OCI-LY7 (cell line): ENCODE measurements at regions of chr14 and their contacts with region 1.

Region 1: DNA sequence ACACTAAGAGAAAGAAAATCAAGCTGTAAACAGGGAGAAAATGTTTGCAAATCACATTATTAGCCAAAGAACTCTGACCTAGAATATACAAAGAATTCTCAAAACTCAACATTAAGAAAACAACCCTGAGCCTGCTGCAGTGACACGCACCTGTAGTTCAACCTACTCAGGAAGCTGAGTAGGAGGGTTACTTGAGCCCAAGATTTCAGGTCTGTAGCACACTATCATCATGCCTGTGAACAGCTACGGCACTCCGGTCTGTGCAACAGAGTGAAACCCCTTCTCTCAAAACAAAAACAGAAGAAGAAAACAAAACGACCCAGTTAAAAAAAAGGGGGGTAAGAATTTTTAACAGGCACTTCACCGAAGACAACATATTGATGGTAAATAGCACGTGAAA is 20.8 kb downstream of the SAV1 start:
- DNase-seq: peak; percentile 59
- H3K4me3 ChIP-seq: peak overlapping the region; percentile 24
- H3K27ac ChIP-seq: peak overlapping the region; percentile 14
- H3K4me1 ChIP-seq: peaks cover 31% of the 10 kb centered on the region
- CTCF ChIP-seq: no peak

Region 2: DNA sequence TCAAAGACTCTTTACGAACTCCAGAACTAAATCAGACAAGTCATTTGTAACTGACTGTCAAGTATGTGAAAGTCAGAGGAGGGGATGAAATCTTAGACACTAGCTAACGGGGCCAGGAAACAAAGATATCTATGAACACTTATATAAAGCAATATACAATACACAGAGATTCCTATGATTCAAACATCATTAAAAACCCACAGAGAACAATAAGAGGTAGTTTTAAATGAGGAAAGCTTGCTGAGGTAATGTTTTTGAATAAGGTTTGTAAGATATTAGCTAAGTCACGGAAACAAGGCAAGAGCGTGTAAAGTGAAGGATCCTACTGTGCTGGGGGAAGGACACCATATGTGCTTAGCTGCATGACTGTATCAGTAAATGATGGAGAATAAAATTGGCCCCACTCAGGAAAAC is 15.9 kb before region 1 on chr14:
- CTCF ChIA-PET with region 1: no interaction called
- POLR2A ChIA-PET with region 1: interaction called, 10 read pairs
- intact Hi-C with region 1: no loop called
- DNase-seq: no peak
- H3K4me3 ChIP-seq: no peak overlapping the region
- H3K27ac ChIP-seq: no peak overlapping the region
- H3K4me1 ChIP-seq: no peaks in the 10 kb centered on the region
- CTCF ChIP-seq: no peak

Region 3: DNA sequence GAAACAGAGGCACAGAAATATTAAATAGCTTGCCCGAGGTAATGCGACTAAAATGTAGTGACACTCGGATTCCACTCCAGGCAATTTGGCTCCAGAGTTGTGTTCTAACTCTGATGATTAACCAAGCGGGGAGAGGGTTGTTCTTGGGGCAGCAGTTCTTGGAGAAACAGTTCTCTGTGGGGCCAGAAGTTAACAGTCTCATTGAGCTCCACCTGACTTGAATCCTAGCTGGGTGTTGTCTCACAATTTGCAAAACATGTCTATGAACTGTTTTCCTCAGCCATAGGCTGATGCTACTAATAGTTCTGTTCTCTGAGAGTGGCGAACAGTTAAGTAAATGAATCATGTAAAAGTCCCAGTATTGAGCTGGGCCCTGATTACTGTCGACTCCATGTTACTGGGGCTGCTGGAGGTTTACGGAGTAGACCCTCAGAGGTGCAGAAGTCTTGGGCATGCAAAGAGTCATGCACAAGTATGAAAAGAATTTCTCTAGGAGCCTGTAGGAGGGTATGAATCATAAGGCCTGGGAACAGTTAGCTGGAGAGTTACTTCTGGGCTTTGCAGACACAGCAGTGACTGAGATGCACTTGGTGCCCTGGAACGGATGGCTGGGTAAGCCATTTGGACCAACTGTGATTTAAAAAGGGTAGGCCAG is 199.1 kb after region 1 on chr14:
- CTCF ChIA-PET with region 1: no interaction called
- POLR2A ChIA-PET with region 1: no interaction called
- intact Hi-C with region 1: no loop called
- DNase-seq: no peak
- H3K4me3 ChIP-seq: no peak overlapping the region
- H3K27ac ChIP-seq: no peak overlapping the region
- H3K4me1 ChIP-seq: no peaks in the 10 kb centered on the region
- CTCF ChIP-seq: no peak

Region 4: DNA sequence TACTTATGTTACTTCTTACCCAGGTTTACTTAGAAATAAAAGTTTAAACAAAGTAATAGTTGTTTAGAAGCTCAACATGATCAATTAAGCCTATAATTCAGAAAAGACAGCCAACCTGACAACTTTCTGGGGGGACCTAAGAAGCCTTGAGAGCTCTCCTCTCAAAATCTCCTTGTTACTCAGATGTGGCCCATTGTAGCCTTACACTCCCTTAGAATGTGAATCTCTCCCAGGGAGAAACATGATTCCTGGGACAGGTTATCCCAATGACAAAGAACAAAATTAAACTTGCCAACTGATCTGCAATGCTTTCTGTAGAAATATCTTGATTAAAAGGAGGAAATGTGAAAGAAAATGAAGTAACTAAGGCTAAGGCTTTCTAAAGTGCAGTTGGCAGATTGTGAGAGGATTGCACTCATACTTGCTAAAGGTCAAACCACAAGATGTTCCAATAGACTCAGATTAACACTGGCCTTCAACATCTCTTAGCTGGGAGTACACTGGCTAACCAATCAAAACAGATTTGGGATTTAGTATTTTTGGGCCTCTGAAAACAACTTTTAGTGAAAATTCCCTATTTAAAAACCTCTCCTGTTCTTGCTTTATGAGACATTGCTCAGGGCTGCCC is 520.4 kb after region 1 on chr14:
- CTCF ChIA-PET with region 1: no interaction called
- POLR2A ChIA-PET with region 1: no interaction called
- intact Hi-C with region 1: no loop called
- DNase-seq: no peak
- H3K4me3 ChIP-seq: no peak overlapping the region
- H3K27ac ChIP-seq: no peak overlapping the region
- H3K4me1 ChIP-seq: no peaks in the 10 kb centered on the region
- CTCF ChIP-seq: no peak